Ascending aorta (tissue), 2 donors: ENCODE measurements at regions of chr10 and their contacts with region 1.

Region 1: DNA sequence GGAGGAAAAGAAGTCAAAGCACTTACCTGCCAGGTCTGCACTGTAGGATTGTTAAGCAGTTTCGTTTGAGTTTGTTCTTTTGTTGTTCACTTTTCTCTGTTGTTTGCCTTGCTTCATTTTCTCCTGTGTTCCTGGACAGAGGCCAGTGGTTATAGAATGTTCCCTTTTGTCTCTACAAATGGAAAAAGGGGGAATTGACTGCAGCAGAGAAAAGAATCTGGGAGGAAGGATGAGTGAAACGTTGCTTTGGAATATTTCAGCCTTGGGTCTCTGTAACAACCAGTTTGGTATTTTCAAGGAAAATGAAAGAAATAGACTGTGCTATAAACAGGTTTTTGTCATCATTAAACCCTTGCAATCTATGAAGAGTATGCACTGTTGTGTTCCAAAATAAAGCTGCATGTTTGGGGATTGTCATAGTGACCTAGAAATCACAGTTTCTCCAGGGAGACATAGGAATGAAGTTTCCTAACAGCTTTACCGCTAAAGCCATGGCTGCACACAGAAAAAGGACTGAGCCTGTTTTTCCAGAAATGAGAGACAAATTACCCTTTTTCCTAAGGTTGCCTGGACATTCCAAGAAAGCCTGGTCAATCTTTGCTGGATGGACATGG is 60.8 kb upstream of the HABP2 start:
- DNase-seq: no peak
- H3K4me3 ChIP-seq: peak overlapping the region; percentile 11 to 51
- H3K27ac ChIP-seq: peak overlapping the region; percentile 63 to 82
- H3K4me1 ChIP-seq: peaks cover 4 to 49% of the 10 kb centered on the region in 2 donors
- H3K27me3 ChIP-seq: no peaks in the 10 kb centered on the region
- CTCF ChIP-seq: no peak

Region 2: DNA sequence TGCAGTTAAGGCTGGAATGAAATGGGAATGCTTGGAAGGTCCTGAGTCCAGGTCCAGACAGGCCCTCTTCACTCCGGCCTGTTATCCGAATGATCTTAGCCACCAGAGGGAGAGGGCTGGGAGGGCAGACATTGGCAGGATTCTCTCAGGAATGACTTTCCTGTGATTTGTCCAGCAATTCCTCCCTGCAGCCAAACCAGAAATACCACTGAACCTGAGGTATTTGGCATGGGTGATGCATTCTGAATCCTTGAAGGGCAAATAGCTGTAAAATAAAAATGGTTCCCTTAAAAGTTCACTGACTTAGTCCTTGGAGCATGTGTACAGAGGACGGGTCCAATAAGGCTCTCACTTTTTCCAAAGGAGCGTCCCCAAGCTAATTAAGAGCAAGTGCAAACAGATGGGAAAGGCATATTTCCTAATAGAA is 16.7 kb before region 1 on chr10:
- intact Hi-C with region 1: loop called (anchors 1 kb)
- DNase-seq: peak in 1 of 2 donors; percentile 82
- H3K4me3 ChIP-seq: peak overlapping the region in 1 of 2 donors; percentile 32
- H3K27ac ChIP-seq: peak overlapping the region; percentile 76 to 77
- H3K4me1 ChIP-seq: peaks cover 23 to 39% of the 10 kb centered on the region in 2 donors
- H3K27me3 ChIP-seq: no peaks in the 10 kb centered on the region
- CTCF ChIP-seq: peak in 2 of 3 experiments; percentile 7 to 43